ENCODE measurements at regions of chr5 and their contacts with region 1.

Region 1: DNA sequence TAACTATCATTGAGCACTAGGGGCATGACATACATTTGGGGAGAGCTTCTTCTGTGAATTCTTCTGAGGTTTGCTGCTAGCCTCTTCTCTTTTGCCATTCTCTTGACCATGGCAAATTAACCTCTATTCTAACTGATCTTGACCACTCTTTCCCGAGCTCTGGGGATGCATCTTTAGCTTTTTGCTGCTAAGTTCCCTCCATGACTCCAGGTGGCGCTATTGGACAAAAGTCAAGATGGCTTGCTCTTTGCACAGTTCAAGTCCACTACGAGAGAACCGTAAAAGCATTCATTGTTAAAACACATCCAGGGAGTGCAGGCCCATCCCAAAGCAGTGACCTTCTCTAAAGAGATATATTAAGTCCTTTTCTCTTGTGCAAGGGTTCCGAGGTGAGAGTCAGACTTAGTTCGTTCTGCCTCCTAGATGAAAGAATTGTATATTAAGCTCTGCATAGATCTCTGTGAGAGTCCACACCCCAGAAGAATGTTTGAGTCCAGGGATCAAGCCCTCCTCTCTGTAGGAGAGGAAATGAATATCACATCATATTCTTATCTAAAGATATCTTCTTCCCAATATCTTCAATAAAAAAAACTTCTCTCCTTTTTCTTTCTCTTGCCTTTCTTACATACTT is 1152.9 kb upstream of the CDH6 start:
- DNase-seq: peak; percentile 69
- ATAC-seq: peak; percentile 97
- H3K4me3 ChIP-seq: no peak overlapping the region
- H3K27ac ChIP-seq: no peak overlapping the region
- H3K4me1 ChIP-seq: no peaks in the 10 kb centered on the region
- H3K27me3 ChIP-seq: no peaks in the 10 kb centered on the region
- CTCF ChIP-seq: peak; percentile 86
- EP300 ChIP-seq: no peak
- POLR2A ChIP-seq: no peak
- RAD21 ChIP-seq: peak; percentile 68

Region 2: GRCh38 chr5:29822521-29822920 is 218.1 kb before region 1 on chr5:
- CTCF ChIA-PET with region 1: no interaction called
- POLR2A ChIA-PET with region 1: no interaction called
- in situ Hi-C with region 1: no loop called
- intact Hi-C with region 1: no loop called
- DNase-seq: no peak
- ATAC-seq: no peak
- H3K4me3 ChIP-seq: no peak overlapping the region
- H3K27ac ChIP-seq: no peak overlapping the region
- H3K4me1 ChIP-seq: no peaks in the 10 kb centered on the region
- H3K27me3 ChIP-seq: no peaks in the 10 kb centered on the region
- CTCF ChIP-seq: no peak
- EP300 ChIP-seq: no peak
- POLR2A ChIP-seq: no peak
- RAD21 ChIP-seq: no peak

Region 3: DNA sequence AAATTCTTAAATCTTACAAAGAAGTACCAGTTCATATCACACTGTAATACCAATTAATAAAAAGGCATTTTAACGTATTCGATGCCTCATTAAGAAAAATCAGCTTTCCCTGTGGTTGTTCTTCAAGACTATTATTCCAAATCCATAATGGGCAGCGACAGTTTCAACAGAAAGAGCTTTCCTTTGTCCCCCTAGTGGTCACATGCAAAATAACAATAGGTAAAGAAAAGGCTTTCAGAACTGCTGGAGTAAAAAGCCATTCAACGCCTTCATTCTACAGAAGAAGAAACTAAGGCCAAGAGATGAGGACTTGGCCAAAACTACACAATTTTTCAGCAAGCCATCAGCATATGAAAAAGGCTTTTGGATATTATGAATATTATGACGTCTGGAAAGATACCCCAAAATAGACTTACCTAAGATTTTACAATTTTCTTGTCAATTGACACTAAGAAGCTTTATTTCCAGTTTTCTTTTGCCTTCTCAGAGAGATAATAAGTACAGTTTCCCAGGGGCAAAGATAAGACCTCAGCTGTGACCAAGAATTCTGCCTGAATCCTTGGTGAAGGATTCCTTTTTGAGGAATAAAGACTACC is 1146.2 kb after region 1 on chr5:
- CTCF ChIA-PET with region 1: interaction called, 6 read pairs
- POLR2A ChIA-PET with region 1: no interaction called
- in situ Hi-C with region 1: no loop called
- intact Hi-C with region 1: loop called (anchors 5 kb)
- DNase-seq: peak; percentile 37
- ATAC-seq: peak; percentile 50
- H3K4me3 ChIP-seq: no peak overlapping the region
- H3K27ac ChIP-seq: no peak overlapping the region
- H3K4me1 ChIP-seq: no peaks in the 10 kb centered on the region
- H3K27me3 ChIP-seq: no peaks in the 10 kb centered on the region
- CTCF ChIP-seq: peak; percentile 60
- EP300 ChIP-seq: no peak
- POLR2A ChIP-seq: no peak
- RAD21 ChIP-seq: no peak

Region 4: DNA sequence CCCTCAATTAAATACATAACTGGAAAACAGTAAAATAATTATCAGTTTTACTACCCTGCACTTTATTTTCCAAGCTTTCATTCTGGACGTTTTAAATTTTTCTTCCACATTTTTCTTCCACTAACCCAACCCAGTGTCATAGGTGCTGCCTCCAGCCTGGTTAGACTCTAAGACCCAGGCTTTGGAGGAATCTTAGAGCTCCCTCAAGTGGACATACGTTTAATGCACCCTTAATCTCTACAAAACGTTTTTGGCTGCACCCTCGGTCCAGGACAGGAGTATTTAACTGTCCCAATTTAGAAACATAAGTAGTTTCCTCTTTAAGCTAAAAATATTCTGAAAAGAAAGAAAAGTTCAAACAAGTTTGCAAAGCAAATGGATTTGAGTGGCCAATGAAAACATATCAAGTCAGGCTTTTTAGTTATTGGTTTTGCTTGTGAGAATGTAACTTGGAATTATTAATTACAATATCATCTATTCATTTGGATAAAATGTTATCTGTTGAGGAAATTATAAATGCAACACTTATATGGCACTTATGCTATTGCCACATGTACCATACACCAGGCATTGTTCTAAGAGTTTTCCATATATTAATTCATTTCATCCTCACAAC is 1191.8 kb after region 1 on chr5:
- CTCF ChIA-PET with region 1: interaction called, 8 read pairs
- POLR2A ChIA-PET with region 1: no interaction called
- in situ Hi-C with region 1: loop called (anchors 25 kb)
- intact Hi-C with region 1: loop called (anchors 1 kb)
- DNase-seq: peak; percentile 48
- ATAC-seq: peak; percentile 94
- H3K4me3 ChIP-seq: no peak overlapping the region
- H3K27ac ChIP-seq: no peak overlapping the region
- H3K4me1 ChIP-seq: no peaks in the 10 kb centered on the region
- H3K27me3 ChIP-seq: no peaks in the 10 kb centered on the region
- CTCF ChIP-seq: peak; percentile 76
- EP300 ChIP-seq: no peak
- POLR2A ChIP-seq: no peak
- RAD21 ChIP-seq: peak; percentile 57; the same call in 1 of the 2 replicates